ENCODE measurements at regions of chr22 and their contacts with region 1.

Region 1: GRCh38 chr22:39170825-39171622 is 18.5 kb upstream of the CBX7 start:
- DNase-seq: peak; percentile 89
- H3K4me3 Mint-ChIP-seq: peak overlapping the region; percentile 60
- H3K27ac Mint-ChIP-seq: peak overlapping the region; percentile 57
- H3K4me1 Mint-ChIP-seq: peaks cover 37% of the 10 kb centered on the region
- H3K27me3 Mint-ChIP-seq: no peaks in the 10 kb centered on the region

Region 2: DNA sequence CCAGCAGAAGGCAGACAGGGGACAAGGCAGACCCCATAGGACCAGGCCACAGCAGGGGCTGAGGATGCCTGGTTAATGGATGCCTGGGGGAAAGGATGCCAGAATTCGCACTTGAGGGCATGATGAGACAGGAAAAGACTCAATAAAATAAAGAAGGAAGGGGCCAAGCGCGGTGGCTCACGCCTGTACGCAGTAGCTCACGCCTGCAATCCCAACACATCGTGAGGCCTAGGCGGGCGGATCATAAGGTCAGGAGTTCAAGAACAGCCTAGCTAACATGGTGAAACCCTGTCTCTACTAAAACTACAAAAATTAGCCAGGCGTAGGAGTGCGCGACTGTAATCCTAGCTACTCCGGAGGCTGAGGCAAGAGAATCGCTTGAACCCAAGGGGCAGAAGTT is 140.3 kb before region 1 on chr22:
- CTCF ChIA-PET with region 1: no interaction called
- intact Hi-C with region 1: no loop called
- DNase-seq: no peak
- H3K4me3 Mint-ChIP-seq: no peak overlapping the region
- H3K27ac Mint-ChIP-seq: no peak overlapping the region
- H3K4me1 Mint-ChIP-seq: peaks cover 15% of the 10 kb centered on the region
- H3K27me3 Mint-ChIP-seq: no peaks in the 10 kb centered on the region

Region 3: DNA sequence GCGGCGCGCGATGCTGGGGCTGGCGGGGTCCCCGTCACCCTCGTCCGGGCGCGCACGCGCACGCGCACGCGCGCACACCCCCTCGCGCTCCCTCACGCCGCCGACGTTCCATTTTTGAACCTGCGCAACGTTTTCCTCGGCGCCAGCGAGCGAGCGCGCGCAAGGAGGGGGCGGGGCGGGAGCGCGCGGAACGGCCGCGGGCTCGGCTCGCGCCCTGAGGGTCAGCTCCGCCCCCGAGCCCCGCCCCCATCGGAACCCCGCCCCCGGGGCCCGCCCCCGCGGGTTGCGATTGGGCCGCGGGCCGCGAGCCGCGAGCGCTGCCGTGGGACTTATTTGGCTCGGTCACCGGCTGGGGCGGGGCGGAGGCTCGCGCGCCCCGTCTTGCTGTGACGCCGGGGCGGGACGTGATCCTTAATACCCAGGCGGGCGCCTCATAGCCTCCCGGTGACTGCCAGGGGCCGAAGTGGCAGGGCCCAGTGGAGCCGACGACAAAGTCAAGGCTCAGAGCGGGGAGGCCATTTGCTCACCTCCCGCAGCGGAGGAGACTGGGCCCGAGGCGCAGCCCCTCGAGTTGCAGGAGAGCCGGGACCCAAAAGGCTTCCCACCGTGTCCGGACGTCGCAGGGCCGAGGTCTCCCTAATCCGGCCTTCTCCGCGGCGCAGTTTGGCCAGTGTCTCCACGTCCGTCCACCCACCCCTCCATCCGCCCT is 18.4 kb before region 1 on chr22 and contains the start of gene CBX7:
- CTCF ChIA-PET with region 1: interaction called, 16 read pairs
- intact Hi-C with region 1: no loop called
- DNase-seq: peak; percentile 94
- H3K4me3 Mint-ChIP-seq: peak within 1 kb of the TSS; percentile 84
- H3K27ac Mint-ChIP-seq: peak within 1 kb of the TSS; percentile 60
- H3K4me1 Mint-ChIP-seq: peaks cover 36% of the 10 kb centered on the region
- H3K27me3 Mint-ChIP-seq: peaks cover 15% of the 10 kb centered on the region
- total RNA-seq, gene CBX7: 20.8 to 24.1 TPM

Region 4: DNA sequence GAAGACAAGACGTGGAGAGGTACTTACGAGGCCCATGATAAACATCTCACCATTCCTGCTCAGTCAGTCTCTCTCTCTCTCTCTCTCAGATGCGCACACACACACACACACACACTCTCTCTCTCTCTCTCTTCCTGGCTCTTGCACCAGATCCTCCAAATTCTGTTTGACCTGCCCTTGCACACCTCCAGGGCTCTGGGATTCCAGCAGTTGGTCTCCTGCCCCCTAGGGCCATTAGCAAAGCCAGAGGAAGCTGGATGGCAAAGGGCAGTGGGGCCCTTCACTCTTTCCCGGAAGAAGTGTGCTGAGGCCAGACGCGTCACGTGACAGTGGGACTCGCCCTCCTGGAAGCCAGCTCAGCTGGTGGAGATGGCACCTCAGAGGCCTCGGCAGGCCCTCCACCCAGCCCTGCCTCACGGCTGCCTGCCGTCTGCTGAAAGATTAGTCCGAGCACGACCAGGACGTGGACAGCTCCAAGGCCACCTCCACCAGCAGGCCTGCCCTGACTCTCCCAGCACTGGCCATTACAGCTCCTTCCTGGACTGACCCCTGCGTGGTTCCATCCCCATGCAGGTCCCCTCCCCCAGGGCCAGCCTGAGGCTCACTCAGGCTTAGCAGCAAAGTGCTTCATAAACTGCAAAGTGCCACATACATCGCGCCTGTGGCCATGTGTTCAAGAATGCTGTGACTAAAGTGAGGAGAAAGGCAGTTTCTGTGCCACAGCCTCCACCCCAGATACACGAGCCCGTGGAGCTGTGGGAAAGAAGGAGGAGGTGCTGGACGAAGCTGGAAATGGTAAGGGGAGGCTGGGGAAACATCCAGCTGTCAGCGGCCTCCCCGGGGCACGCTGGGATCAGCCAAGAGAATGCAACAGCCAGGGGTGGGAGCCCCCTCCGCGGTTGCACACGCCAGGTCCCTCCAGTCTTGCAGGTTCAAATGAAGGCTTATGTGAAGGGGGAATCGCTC is 70.1 kb after region 1 on chr22:
- CTCF ChIA-PET with region 1: interaction called, 16 read pairs
- intact Hi-C with region 1: loop called (anchors 2 kb)
- DNase-seq: peak; percentile 75
- H3K4me3 Mint-ChIP-seq: peak overlapping the region; percentile 79
- H3K27ac Mint-ChIP-seq: peak overlapping the region; percentile 88
- H3K4me1 Mint-ChIP-seq: peaks cover 54% of the 10 kb centered on the region
- H3K27me3 Mint-ChIP-seq: peaks cover 25% of the 10 kb centered on the region

Region 5: DNA sequence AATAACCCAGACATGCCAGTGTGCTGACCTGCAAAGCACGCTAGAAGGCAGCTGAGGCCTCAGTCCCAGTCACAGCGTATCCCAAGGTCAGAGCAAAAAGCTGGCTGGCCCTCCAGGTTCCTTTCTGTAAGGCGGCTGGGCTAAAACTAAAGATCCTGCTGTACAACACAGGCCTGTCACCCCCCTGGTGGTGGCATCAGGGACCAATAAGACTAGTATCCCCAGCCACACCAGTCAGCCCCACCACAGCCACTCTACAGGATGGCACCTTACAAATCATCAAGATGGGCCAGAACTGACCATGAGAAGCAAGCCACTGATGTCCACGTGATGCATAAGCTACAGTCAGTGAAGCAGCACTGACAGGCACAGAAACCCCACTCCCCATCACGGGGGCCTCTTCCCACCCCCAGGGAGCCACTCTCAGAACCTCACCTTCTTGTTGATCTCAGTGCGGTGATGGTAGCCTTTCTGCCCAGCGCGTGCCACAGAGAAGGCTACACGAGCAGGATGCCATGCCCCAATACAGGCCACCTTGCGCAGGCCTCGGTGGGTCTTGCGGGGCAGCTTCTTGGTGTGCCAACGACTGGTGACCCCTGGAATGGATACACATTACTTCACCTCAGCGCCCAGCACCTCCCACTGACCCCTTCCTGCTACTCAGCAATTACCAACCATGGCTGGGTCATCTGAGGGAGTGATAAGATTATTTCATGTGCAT is 143.4 kb after region 1 on chr22:
- CTCF ChIA-PET with region 1: interaction called, 63 read pairs
- intact Hi-C with region 1: loop called (anchors 1 kb)
- DNase-seq: no peak
- H3K4me3 Mint-ChIP-seq: no peak overlapping the region
- H3K27ac Mint-ChIP-seq: no peak overlapping the region
- H3K4me1 Mint-ChIP-seq: peaks cover 41% of the 10 kb centered on the region
- H3K27me3 Mint-ChIP-seq: no peaks in the 10 kb centered on the region

Region 6: GRCh38 chr22:39364714-39365491 is 193.9 kb after region 1 on chr22:
- CTCF ChIA-PET with region 1: no interaction called
- intact Hi-C with region 1: no loop called
- DNase-seq: no peak
- H3K4me3 Mint-ChIP-seq: no peak overlapping the region
- H3K27ac Mint-ChIP-seq: no peak overlapping the region
- H3K4me1 Mint-ChIP-seq: no peaks in the 10 kb centered on the region
- H3K27me3 Mint-ChIP-seq: no peaks in the 10 kb centered on the region

Region 7: DNA sequence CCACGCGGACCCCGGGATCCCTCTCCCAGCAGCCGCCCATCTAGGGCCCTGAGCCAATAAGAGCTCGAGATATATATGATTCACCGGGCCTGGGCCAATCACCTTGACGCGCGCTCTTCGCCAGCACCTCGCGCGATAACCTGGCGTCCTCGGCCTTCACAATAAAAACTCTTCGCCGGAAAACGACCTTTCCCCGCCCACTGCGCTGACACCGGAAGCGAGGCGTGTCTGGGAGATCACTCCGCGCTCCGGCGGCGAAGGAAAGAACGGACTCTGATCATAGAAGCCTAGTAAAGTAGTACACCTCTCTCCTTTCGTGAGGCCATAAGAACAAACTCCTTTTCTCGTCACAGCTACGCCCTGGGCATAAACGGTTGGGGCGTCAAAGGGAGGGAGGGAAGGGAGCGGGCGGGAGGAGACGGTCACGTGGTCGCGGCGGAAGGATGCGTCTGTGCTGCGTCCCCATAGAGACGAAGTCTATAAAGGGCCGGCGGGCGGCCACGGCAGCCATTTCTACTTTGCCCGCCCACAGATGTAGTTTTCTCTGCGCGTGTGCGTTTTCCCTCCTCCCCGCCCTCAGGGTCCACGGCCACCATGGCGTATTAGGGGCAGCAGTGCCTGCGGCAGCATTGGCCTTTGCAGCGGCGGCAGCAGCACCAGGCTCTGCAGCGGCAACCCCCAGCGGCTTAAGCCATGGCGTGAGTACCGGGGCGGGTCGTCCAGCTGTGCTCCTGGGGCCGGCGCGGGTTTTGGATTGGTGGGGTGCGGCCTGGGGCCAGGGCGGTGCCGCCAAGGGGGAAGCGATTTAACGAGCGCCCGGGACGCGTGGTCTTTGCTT is 349.2 kb after region 1 on chr22 and contains the start of gene ATF4:
- CTCF ChIA-PET with region 1: interaction called, 3 read pairs
- intact Hi-C with region 1: loop called (anchors 2 kb)
- DNase-seq: peak; percentile 98
- H3K4me3 Mint-ChIP-seq: peak within 1 kb of the TSS; percentile 83
- H3K27ac Mint-ChIP-seq: peak within 1 kb of the TSS; percentile 95
- H3K4me1 Mint-ChIP-seq: peaks cover 64% of the 10 kb centered on the region
- H3K27me3 Mint-ChIP-seq: peaks cover 2% of the 10 kb centered on the region
- total RNA-seq, gene ATF4: 589 to 609 TPM

Measured in activated naive CD4-positive, alpha-beta T cell treated with anti-CD3 and anti-CD28 coated beads for 36 hours (primary cell).